CD4-positive, alpha-beta T cell (primary cell): ENCODE measurements at regions of chr15 and their contacts with region 1.

Region 1: GRCh38 chr15:74373731-74374647 is 6.5 kb upstream of the CYP11A1 start:
- DNase-seq: peak; percentile 91 to 97 (median 95)
- ATAC-seq: peak; percentile 95
- H3K4me3 ChIP-seq: peak overlapping the region; percentile 94
- H3K4me3 Mint-ChIP-seq: peak overlapping the region; percentile 86
- H3K27ac ChIP-seq: peak overlapping the region; percentile 51 to 54
- H3K27ac Mint-ChIP-seq: peak overlapping the region; percentile 8
- H3K4me1 ChIP-seq: peaks cover 26% of the 10 kb centered on the region
- H3K4me1 Mint-ChIP-seq: peaks cover 12% of the 10 kb centered on the region
- H3K27me3 ChIP-seq: peaks cover 0 to 2% of the 10 kb centered on the region in 2 experiments
- H3K27me3 Mint-ChIP-seq: peaks cover 13% of the 10 kb centered on the region
- CTCF ChIP-seq: peak; percentile 99

Region 2: DNA sequence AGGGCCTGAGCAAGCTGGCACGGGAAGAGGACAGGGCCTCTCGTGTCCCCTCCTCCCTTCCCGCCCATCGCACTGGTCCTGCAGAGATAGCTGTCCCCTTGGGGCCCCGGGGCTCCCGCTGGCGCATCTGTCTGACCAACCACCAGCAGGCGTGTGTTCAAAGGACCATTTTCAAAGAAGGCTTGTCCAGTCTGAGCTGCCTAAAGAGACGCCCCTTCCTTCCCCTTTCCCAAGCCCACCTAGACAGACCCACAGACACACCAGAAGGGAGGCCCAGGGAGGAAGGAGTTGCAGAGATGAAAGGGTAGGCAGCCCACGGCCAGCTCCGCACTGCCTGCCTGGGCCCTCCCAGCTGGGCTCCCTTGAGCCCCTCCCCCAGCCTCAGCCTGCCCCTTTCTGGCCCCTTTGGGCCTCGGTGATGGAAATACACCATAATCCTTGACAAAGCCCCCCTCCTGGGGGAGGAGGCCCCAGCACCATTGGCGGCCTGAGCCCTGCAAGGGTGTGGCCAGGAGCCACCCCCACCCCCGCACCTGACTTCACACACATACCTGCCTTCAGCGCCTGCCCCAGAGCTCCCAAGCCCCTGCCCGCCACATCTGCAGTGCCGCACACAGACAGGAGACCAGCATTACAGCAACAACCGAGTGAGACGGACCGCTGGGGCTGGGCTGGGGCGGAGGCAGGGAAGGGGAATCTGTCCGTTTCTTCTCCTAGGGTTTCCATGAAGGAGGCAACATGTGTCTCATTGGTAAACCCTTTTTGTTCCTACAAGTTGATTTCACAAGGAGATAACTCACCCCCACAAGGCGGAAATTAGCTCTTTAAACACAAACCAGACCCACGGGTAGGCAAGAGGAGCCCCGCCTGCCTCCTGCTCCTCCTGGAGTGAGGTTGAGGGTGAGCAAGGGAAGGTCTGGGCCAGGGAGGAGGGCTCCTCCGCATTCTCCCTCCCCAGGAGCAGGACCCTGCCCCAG is 171.2 kb before region 1 on chr15 and contains the start of gene STRA6:
- CTCF ChIA-PET with region 1: no interaction called
- POLR2A ChIA-PET with region 1: no interaction called
- intact Hi-C with region 1: no loop called
- DNase-seq: no peak
- ATAC-seq: no peak
- H3K4me3 ChIP-seq: no peak within 1 kb of the TSS
- H3K4me3 Mint-ChIP-seq: no peak within 1 kb of the TSS
- H3K27ac ChIP-seq: no peak within 1 kb of the TSS
- H3K27ac Mint-ChIP-seq: no peak within 1 kb of the TSS
- H3K4me1 ChIP-seq: no peaks in the 10 kb centered on the region
- H3K4me1 Mint-ChIP-seq: no peaks in the 10 kb centered on the region
- H3K27me3 ChIP-seq: peaks cover 2 to 5% of the 10 kb centered on the region in 2 experiments
- H3K27me3 Mint-ChIP-seq: peaks cover 9% of the 10 kb centered on the region
- CTCF ChIP-seq: no peak
- total RNA-seq, gene STRA6: not detected

Region 3: DNA sequence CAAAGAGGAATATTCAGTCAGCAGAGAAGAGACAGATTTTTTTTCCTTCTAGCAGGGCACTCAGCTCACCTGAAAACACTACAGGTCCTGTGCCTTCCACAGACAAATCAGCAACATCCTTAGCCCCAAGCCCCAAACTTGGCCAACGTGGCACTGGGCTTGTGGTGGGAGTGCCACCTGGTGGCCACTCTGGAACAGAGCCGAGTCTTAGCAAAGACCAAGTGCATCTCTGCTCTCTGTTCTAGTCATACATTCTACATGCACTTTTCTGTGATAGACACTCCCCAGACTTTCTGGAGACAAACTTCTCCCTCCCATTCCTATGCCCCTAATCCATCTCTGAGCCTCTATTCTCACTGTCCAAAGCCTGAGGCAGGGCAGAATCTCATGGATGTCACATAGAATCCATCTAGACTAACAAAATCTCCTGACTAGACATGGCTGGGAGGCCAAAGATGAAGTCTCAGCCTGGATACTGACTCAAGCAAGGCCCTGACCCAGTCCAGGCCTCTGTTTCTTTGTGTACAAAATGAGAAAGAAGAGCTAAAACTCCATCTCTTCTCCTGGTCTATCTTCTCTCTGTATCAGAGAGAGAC is 64.8 kb after region 1 on chr15:
- CTCF ChIA-PET with region 1: interaction called, 9 read pairs
- POLR2A ChIA-PET with region 1: interaction called, 4 read pairs
- intact Hi-C with region 1: loop called (anchors 1 kb)
- DNase-seq: peak; percentile 59 to 86 (median 69)
- ATAC-seq: peak; percentile 84
- H3K4me3 ChIP-seq: no peak overlapping the region
- H3K4me3 Mint-ChIP-seq: peak overlapping the region; percentile 38
- H3K27ac ChIP-seq: no peak overlapping the region
- H3K27ac Mint-ChIP-seq: no peak overlapping the region
- H3K4me1 ChIP-seq: peaks cover 13% of the 10 kb centered on the region
- H3K4me1 Mint-ChIP-seq: peaks cover 16% of the 10 kb centered on the region
- H3K27me3 ChIP-seq: no peaks in the 10 kb centered on the region
- H3K27me3 Mint-ChIP-seq: no peaks in the 10 kb centered on the region
- CTCF ChIP-seq: peak; percentile 82

Region 4: GRCh38 chr15:74460871-74461846 is 87.2 kb after region 1 on chr15 and contains the start of gene UBL7:
- CTCF ChIA-PET with region 1: interaction called, 7 read pairs
- POLR2A ChIA-PET with region 1: interaction called, 5 read pairs
- intact Hi-C with region 1: loop called in 1 of 2 experiments (anchors 1 kb)
- DNase-seq: peak; percentile 91 to 97 (median 96)
- ATAC-seq: peak; percentile 98
- H3K4me3 ChIP-seq: peak within 1 kb of the TSS; percentile 92
- H3K4me3 Mint-ChIP-seq: peak within 1 kb of the TSS; percentile 97
- H3K27ac ChIP-seq: peak within 1 kb of the TSS; percentile 61 to 62
- H3K27ac Mint-ChIP-seq: peak within 1 kb of the TSS; percentile 84
- H3K4me1 ChIP-seq: peaks cover 19% of the 10 kb centered on the region
- H3K4me1 Mint-ChIP-seq: peaks cover 53% of the 10 kb centered on the region
- H3K27me3 ChIP-seq: no peaks in the 10 kb centered on the region
- H3K27me3 Mint-ChIP-seq: no peaks in the 10 kb centered on the region
- CTCF ChIP-seq: peak; percentile 15
- total RNA-seq, gene UBL7: 14.3 to 17.1 TPM

Region 5: DNA sequence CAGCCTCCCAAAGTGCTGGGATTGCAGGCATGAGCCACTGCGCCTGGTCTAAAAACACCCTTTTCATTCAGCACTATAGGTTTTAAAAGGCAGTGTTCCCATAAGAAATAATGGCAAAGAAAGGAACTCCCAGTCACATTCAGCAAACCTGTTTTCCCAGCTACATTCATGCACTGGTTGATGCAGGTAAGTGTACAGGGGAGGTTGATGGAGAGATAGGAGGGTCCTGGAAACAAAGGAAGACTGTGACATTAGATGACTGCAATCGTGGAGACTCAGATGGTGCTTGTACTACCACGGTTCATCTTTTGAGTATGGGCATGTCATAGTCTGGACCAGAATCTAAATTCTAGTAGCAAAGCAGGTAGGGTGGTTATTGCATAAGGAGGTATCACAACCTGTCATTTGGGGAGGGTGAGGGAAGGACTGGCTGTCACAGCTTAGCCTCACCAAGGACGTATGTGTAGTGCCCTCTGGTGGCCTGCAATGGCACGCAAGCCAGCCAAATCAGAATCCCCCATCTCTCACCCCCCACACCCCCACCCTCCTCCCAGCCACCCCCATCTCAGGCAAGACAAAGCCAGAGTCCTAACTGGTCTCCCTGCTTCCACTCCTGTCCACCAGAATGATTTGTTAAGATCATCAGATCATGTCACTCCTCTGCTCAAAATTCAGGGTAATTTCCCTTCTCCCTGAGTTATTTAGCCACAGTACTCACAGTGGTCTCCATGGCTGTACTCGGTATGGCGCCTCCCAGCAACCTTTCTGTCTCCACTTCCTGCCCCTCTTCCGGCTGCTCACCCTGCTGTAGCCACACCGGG is 115.7 kb after region 1 on chr15:
- CTCF ChIA-PET with region 1: interaction called, 3 read pairs
- POLR2A ChIA-PET with region 1: no interaction called
- intact Hi-C with region 1: loop called (anchors 1 to 2 kb)
- DNase-seq: peak; percentile 46 to 83 (median 61)
- ATAC-seq: peak; percentile 96
- H3K4me3 ChIP-seq: no peak overlapping the region
- H3K4me3 Mint-ChIP-seq: no peak overlapping the region
- H3K27ac ChIP-seq: no peak overlapping the region
- H3K27ac Mint-ChIP-seq: no peak overlapping the region
- H3K4me1 ChIP-seq: peaks cover 4% of the 10 kb centered on the region
- H3K4me1 Mint-ChIP-seq: peaks cover 11% of the 10 kb centered on the region
- H3K27me3 ChIP-seq: no peaks in the 10 kb centered on the region
- H3K27me3 Mint-ChIP-seq: no peaks in the 10 kb centered on the region
- CTCF ChIP-seq: peak; percentile 69

Region 6: GRCh38 chr15:74635228-74635627 is 261.2 kb after region 1 on chr15:
- CTCF ChIA-PET with region 1: no interaction called
- POLR2A ChIA-PET with region 1: no interaction called
- intact Hi-C with region 1: loop called (anchors 1 to 2 kb)
- DNase-seq: peak; percentile 63 to 87 (median 70)
- ATAC-seq: peak; percentile 97
- H3K4me3 ChIP-seq: no peak overlapping the region
- H3K4me3 Mint-ChIP-seq: no peak overlapping the region
- H3K27ac ChIP-seq: no peak overlapping the region
- H3K27ac Mint-ChIP-seq: no peak overlapping the region
- H3K4me1 ChIP-seq: peaks cover 5% of the 10 kb centered on the region
- H3K4me1 Mint-ChIP-seq: no peaks in the 10 kb centered on the region
- H3K27me3 ChIP-seq: no peaks in the 10 kb centered on the region
- H3K27me3 Mint-ChIP-seq: no peaks in the 10 kb centered on the region
- CTCF ChIP-seq: peak; percentile 85

Region 7: DNA sequence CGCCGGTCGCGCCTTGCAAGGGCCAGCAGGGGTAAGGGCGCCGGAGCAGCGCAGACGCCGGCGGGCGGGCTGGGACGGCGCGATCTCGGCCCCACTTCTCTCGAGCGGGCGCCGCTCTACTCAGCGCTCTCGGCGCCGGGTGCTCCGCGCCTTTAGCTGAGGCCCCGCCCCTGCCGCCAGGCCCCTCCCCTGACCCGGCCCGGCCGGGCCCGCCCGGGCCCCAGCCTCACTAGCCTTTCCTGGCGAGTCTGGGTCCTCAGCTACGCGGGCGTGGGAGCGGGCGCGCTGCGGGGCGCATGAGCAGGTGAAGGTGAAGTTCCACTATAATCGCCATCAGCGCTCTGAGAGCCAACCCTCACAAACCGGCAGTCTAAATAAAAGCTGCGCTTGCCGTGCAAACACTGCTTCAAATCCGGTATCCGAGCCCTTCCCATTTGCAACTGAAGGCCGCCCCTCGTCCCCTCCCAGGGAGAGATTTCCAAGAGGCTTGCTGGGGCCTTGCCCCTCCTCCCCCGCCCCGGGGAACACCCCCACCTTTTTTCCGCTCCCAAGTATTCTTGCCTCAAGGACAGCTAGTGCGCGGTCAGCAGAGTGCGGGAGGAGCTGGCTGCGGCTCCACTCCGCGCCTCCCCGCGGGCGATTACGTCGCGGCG is 582.8 kb after region 1 on chr15 and contains the start of gene RPP25:
- CTCF ChIA-PET with region 1: interaction called, 3 read pairs
- POLR2A ChIA-PET with region 1: no interaction called
- intact Hi-C with region 1: loop called in 1 of 2 experiments (anchors 10 kb)
- DNase-seq: peak; percentile 24 to 78 (median 62)
- ATAC-seq: peak; percentile 84
- H3K4me3 ChIP-seq: peak within 1 kb of the TSS; percentile 60
- H3K4me3 Mint-ChIP-seq: peak within 1 kb of the TSS; percentile 83
- H3K27ac ChIP-seq: no peak within 1 kb of the TSS
- H3K27ac Mint-ChIP-seq: no peak within 1 kb of the TSS
- H3K4me1 ChIP-seq: peaks cover 41% of the 10 kb centered on the region
- H3K4me1 Mint-ChIP-seq: peaks cover 21% of the 10 kb centered on the region
- H3K27me3 ChIP-seq: peaks cover 36 to 37% of the 10 kb centered on the region in 2 experiments
- H3K27me3 Mint-ChIP-seq: peaks cover 35% of the 10 kb centered on the region
- CTCF ChIP-seq: no peak
- total RNA-seq, gene RPP25: 0.14 to 0.45 TPM

Region 8: DNA sequence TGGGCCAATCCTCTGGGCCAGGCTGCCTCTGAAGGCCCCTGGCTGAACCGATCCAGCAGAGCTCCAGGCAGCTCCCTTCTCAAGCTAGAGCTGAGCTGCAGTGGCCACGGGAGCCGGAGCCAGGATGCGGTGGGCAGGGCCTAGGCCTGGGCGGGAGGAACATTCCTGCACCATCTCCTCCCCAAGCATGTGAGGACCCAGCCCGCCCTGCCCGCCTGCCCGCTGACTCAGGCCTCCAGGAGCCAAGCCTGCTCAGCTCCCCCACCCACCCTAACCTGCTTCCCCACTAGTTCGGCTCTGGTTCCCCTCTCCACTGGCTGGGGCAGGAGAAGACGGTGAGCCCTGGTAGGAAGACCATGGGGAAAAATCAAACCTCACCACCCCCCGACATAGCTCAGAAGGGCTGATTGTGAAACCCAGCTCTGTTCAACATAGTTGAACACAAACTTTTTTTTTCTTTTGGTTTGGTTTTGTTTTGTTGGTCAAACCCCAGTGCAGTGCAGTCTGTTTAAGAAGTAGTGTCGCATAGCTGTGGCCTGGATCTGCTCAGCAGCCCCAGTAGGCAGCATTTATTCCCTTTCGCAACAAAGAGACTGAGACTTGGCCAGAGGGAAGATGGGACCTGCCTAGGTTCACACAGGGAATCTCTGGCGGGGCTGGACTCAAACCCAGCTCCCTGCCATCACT is 1287.2 kb after region 1 on chr15:
- CTCF ChIA-PET with region 1: no interaction called
- POLR2A ChIA-PET with region 1: no interaction called
- intact Hi-C with region 1: no loop called
- DNase-seq: no peak
- ATAC-seq: no peak
- H3K4me3 ChIP-seq: no peak overlapping the region
- H3K4me3 Mint-ChIP-seq: no peak overlapping the region
- H3K27ac ChIP-seq: no peak overlapping the region
- H3K27ac Mint-ChIP-seq: no peak overlapping the region
- H3K4me1 ChIP-seq: no peaks in the 10 kb centered on the region
- H3K4me1 Mint-ChIP-seq: no peaks in the 10 kb centered on the region
- H3K27me3 ChIP-seq: no peaks in the 10 kb centered on the region
- H3K27me3 Mint-ChIP-seq: no peaks in the 10 kb centered on the region
- CTCF ChIP-seq: no peak